Colonic mucosa (tissue), 4 donors: ENCODE measurements at regions of chr1 and their contacts with region 1.

Region 1: GRCh38 chr1:220046052-220046930 is at the start of gene EPRS1:
- DNase-seq: peak; percentile 95
- H3K4me3 ChIP-seq: peak within 1 kb of the TSS; percentile 91
- H3K27ac ChIP-seq: peak within 1 kb of the TSS; percentile 89
- H3K4me1 ChIP-seq: peaks cover 16% of the 10 kb centered on the region
- H3K27me3 ChIP-seq: no peaks in the 10 kb centered on the region
- CTCF ChIP-seq: peak; percentile 64
- total RNA-seq, gene EPRS1: 78.8 to 124 TPM

Region 2: GRCh38 chr1:220089650-220090556 is 43.6 kb after region 1 on chr1 and contains the start of gene BPNT1:
- intact Hi-C with region 1: loop called (anchors 10 kb)
- DNase-seq: peak; percentile 99
- H3K4me3 ChIP-seq: peak within 1 kb of the TSS; percentile 51
- H3K27ac ChIP-seq: peak within 1 kb of the TSS; percentile 69
- H3K4me1 ChIP-seq: peaks cover under 1% of the 10 kb centered on the region
- H3K27me3 ChIP-seq: no peaks in the 10 kb centered on the region
- CTCF ChIP-seq: no peak
- total RNA-seq, gene BPNT1: 57.5 to 71.5 TPM

Region 3: GRCh38 chr1:220182656-220183055 is 136.4 kb after region 1 on chr1:
- intact Hi-C with region 1: no loop called
- DNase-seq: no peak
- H3K4me3 ChIP-seq: no peak overlapping the region
- H3K27ac ChIP-seq: no peak overlapping the region
- H3K4me1 ChIP-seq: no peaks in the 10 kb centered on the region
- H3K27me3 ChIP-seq: no peaks in the 10 kb centered on the region
- CTCF ChIP-seq: no peak